ENCODE measurements at regions of chr1 and their contacts with region 1.

Region 1: GRCh38 chr1:150874455-150875206 is 1.8 kb downstream of the ARNT start:
- DNase-seq: peak in 1 of 2 donors; percentile 18
- H3K4me3 ChIP-seq: peak overlapping the region; percentile 80 to 99 (median 85)
- H3K27ac ChIP-seq: peak overlapping the region; percentile 37 to 99 (median 98)
- H3K4me1 ChIP-seq: peaks cover 14 to 46% (median 30%) of the 10 kb centered on the region in 4 donors
- H3K27me3 ChIP-seq: no peaks in the 10 kb centered on the region
- CTCF ChIP-seq: no peak
- EP300 ChIP-seq: no peak
- POLR2A ChIP-seq: no peak

Region 2: DNA sequence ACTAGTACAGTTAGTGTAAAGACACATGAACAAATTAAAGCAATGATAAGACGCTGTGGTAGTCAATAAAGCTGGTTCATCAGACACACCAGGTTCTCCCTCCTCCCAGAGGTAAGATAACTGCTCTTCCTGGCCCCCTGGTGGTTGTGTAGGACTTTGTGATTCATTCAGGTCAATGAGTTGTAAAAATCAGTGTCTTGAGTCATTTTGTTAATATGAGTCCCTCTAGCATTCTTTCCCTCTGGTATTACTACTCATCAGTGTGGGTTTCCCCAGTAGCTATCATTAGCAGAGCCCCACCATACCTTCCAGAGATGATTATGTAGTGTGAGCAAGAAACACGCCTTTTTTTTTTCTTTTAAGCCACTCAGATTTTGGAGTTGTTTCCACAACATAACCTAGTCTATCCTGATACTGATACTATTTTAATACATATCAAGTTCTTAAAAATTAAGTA is 47.9 kb after region 1 on chr1:
- intact Hi-C with region 1: loop called (anchors 5 kb)
- DNase-seq: peak; percentile 72 to 85
- H3K4me3 ChIP-seq: no peak overlapping the region
- H3K27ac ChIP-seq: no peak overlapping the region
- H3K4me1 ChIP-seq: peaks cover 8 to 22% (median 14%) of the 10 kb centered on the region in 4 donors
- H3K27me3 ChIP-seq: no peaks in the 10 kb centered on the region
- CTCF ChIP-seq: peak in 5 of 7 experiments; percentile 40 to 74 (median 59)
- EP300 ChIP-seq: no peak
- POLR2A ChIP-seq: no peak

Measured in stomach (tissue), 19 donors.